Heart left ventricle (tissue), 16 donors: ENCODE measurements at regions of chr17 and their contacts with region 1.

Region 1: DNA sequence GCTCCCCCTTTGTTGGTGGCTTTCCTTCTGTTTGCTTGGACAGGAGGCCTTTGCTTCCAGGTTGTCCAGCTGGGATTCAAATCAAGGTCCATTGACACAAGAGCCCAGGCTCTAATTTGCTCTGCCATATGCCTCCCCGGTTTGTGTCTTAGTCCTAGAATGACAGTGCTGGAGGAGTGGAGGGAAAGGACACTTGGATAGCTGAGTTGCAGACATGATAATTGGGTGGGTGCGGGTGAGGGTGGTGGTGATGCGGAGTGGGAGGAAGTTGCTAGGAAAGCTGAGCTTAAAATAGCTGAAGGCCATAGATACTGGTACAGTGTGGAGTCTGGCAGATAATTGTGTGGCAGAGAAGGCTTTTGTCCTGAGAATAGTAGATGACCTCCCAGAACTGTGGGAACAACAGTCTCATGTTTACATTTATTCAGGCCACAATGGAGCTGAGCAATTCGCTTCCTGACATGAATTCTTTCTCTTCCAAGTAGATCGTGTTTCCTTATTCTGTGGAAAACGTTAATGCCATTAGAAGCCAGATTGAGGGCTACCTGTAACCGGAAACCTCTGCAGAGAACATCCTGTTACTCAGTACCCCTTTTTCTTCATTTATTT is 23.8 kb downstream of the SEC14L1 start:
- DNase-seq: peak in 1 of 5 donors; percentile 48
- ATAC-seq: peak; percentile 86 to 92 (median 88)
- H3K4me3 ChIP-seq: peak overlapping the region in 1 of 12 donors; percentile 0
- H3K27ac ChIP-seq: peak overlapping the region; percentile 45 to 88 (median 71)
- H3K4me1 ChIP-seq: peaks cover 25 to 80% (median 64%) of the 10 kb centered on the region in 12 donors
- H3K27me3 ChIP-seq: no peaks in the 10 kb centered on the region
- CTCF ChIP-seq: no peak
- POLR2A ChIP-seq: no peak

Region 2: GRCh38 chr17:77118251-77118928 is 46.2 kb before region 1 on chr17:
- intact Hi-C with region 1: no loop called
- DNase-seq: peak in 2 of 5 donors; percentile 41 to 54
- ATAC-seq: peak; percentile 45 to 85 (median 46)
- H3K4me3 ChIP-seq: no peak overlapping the region
- H3K27ac ChIP-seq: peak overlapping the region; percentile 71 to 93 (median 88)
- H3K4me1 ChIP-seq: peaks cover 7 to 74% (median 51%) of the 10 kb centered on the region in 12 donors
- H3K27me3 ChIP-seq: no peaks in the 10 kb centered on the region
- CTCF ChIP-seq: no peak
- POLR2A ChIP-seq: peak in 1 of 2 donors; percentile 29

Region 3: GRCh38 chr17:77208217-77208808 is 43.7 kb after region 1 on chr17:
- intact Hi-C with region 1: loop called in 3 of 10 experiments (anchors 5 kb)
- DNase-seq: peak in 4 of 5 donors; percentile 56 to 63 (median 58)
- ATAC-seq: peak; percentile 34 to 82 (median 72)
- H3K4me3 ChIP-seq: no peak overlapping the region
- H3K27ac ChIP-seq: peak overlapping the region; percentile 21 to 72 (median 55)
- H3K4me1 ChIP-seq: peaks cover 4 to 70% (median 35%) of the 10 kb centered on the region in 12 donors
- H3K27me3 ChIP-seq: no peaks in the 10 kb centered on the region
- CTCF ChIP-seq: peak in 10 of 12 donors; percentile 17 to 60 (median 35)
- POLR2A ChIP-seq: no peak